ENCODE measurements at regions of chr6 and their contacts with region 1.

Region 1: GRCh38 chr6:27177485-27178406 is 69.8 kb upstream of the PRSS16 start:
- DNase-seq: peak; percentile 88
- H3K4me3 ChIP-seq: peak overlapping the region; percentile 80 to 100 (median 96)
- H3K27ac ChIP-seq: peak overlapping the region; percentile 62
- H3K4me1 ChIP-seq: peaks cover 3% of the 10 kb centered on the region
- H3K27me3 ChIP-seq: no peaks in the 10 kb centered on the region
- CTCF ChIP-seq: peak; percentile 53 to 69

Region 2: DNA sequence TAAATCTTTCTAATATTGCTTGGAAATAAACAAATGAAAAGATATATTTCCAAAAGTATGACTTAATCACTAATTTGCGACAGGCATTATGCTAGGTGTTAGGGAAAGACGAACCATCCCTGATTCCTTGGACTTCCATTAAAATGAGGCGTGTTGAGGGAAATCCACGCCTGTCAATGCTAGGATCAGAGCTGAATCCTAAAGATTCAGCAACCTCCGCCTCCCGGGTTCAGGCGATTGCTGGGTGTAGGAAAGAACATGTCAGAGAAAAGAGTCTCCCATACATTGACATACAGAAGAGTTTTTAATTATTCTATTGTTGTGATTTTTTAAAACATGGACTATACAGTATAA is 53.0 kb after region 1 on chr6:
- CTCF ChIA-PET with region 1: no interaction called
- dilution Hi-C with region 1: no loop called
- in situ Hi-C with region 1: no loop called
- intact Hi-C with region 1: loop called (anchors 5 kb)
- DNase-seq: no peak
- H3K4me3 ChIP-seq: peak overlapping the region; percentile 3 to 39 (median 28)
- H3K27ac ChIP-seq: no peak overlapping the region
- H3K4me1 ChIP-seq: peaks cover 5% of the 10 kb centered on the region
- H3K27me3 ChIP-seq: peaks cover 2% of the 10 kb centered on the region
- CTCF ChIP-seq: no peak

Region 3: DNA sequence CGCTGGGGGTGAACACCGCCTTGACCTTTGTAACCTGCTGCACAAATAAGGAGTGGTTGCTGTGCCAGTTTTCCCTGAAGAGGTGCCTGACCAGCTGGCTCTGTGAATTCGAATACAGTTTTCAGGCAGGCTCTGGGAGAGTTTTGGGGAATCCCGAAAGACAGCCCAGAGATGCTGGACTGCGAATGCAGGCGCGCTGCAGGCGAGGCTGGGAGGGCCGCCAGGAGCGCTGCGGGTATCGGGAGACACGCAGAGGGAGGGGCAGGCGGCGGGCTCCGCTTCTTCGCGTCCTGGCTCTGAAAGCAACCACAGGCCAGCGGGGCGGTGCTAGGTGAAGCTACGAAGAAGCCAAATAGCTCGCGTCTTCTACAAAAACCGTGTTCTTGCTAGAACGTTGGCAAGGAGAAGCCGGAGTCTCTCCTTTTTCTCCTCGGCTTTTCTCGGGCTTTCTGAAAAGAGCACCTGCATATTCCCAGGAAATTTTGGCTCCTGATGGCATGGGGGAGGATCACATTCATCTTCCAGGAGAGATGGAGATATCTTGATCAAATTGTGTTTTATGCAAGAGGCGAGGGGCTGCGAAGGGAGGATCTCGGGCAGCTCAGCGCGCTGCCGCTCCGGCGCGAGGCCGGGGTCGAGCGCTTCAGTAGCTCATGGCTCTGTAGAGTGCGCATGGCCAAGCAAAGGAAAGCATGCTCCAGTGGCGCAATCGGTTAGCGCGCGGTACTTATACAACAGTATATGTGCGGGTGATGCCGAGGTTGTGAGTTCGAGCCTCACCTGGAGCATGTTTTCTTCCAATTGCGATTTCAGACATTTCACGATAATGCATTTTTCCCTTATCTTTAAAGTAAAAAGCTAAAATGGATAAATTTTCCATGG is 453.2 kb after region 1 on chr6:
- CTCF ChIA-PET with region 1: interaction called, 17 read pairs
- dilution Hi-C with region 1: no loop called
- in situ Hi-C with region 1: no loop called
- intact Hi-C with region 1: no loop called
- DNase-seq: peak; percentile 79
- H3K4me3 ChIP-seq: peak overlapping the region; percentile 33 to 72 (median 69)
- H3K27ac ChIP-seq: no peak overlapping the region
- H3K4me1 ChIP-seq: no peaks in the 10 kb centered on the region
- H3K27me3 ChIP-seq: no peaks in the 10 kb centered on the region
- CTCF ChIP-seq: peak in 1 of 2 donors; percentile 16